Activated CD4-positive, alpha-beta T cell treated with anti-CD3 and anti-CD28 coated beads, Interleukin-2, amount 10 ng/mL, durations not matched to agents 24 days and 14 days (primary cell): ENCODE measurements at regions of chrX and their contacts with region 1.

Region 1: GRCh38 chrX:150898343-150899190 is at the start of gene CD99L2:
- DNase-seq: peak; percentile 96
- H3K4me3 Mint-ChIP-seq: peak within 1 kb of the TSS; percentile 91
- H3K27ac Mint-ChIP-seq: peak within 1 kb of the TSS; percentile 69
- H3K4me1 Mint-ChIP-seq: peaks cover 5% of the 10 kb centered on the region
- H3K27me3 Mint-ChIP-seq: peaks cover 13% of the 10 kb centered on the region
- total RNA-seq, gene CD99L2: 8.1 and 10.9 TPM in 2 replicates

Region 2: GRCh38 chrX:149527705-149528104 is 1370.9 kb before region 1 on chrX:
- intact Hi-C with region 1: loop called (anchors 10 kb)
- DNase-seq: peak; percentile 80
- H3K4me3 Mint-ChIP-seq: no peak overlapping the region
- H3K27ac Mint-ChIP-seq: peak overlapping the region; percentile 54
- H3K4me1 Mint-ChIP-seq: peaks cover 14% of the 10 kb centered on the region
- H3K27me3 Mint-ChIP-seq: no peaks in the 10 kb centered on the region

Region 3: GRCh38 chrX:150975655-150976390 is 77.3 kb after region 1 on chrX:
- intact Hi-C with region 1: no loop called
- DNase-seq: no peak
- H3K4me3 Mint-ChIP-seq: no peak overlapping the region
- H3K27ac Mint-ChIP-seq: no peak overlapping the region
- H3K4me1 Mint-ChIP-seq: no peaks in the 10 kb centered on the region
- H3K27me3 Mint-ChIP-seq: no peaks in the 10 kb centered on the region